RWPE1 (cell line): ENCODE measurements at regions of chr5 and their contacts with region 1.

Region 1: GRCh38 chr5:135829681-135830383 is 4.6 kb upstream of the SLC25A48 start:
- DNase-seq: peak; percentile 82
- H3K27ac ChIP-seq: no peak overlapping the region
- CTCF ChIP-seq: peak; percentile 84

Region 2: GRCh38 chr5:135560858-135561257 is 269.0 kb before region 1 on chr5:
- CTCF ChIA-PET with region 1: interaction called, 27 read pairs
- POLR2A ChIA-PET with region 1: no interaction called
- DNase-seq: peak; percentile 91
- H3K27ac ChIP-seq: no peak overlapping the region
- CTCF ChIP-seq: peak; percentile 95

Region 3: DNA sequence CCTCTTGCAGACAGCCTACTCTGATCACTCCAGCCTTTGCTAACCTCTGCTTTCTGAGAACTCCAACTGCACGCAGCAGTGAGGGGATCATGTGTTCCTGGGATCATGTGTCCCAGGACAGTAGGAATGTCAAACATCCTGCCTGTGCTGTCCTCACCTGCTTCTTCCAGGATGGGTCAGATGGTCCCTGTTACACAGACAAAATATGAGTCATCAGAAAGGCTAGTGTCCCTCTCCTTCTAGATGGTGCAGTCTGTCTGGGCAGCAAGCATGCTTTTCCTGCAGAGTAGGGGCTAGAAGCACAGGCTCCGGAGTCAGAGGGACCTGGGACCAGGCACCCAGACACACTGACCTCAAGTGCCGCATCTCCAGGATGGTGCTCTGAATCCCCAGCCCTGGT is 15.5 kb before region 1 on chr5:
- CTCF ChIA-PET with region 1: interaction called, 15 read pairs
- POLR2A ChIA-PET with region 1: no interaction called
- DNase-seq: no peak
- H3K27ac ChIP-seq: no peak overlapping the region
- CTCF ChIP-seq: no peak

Region 4: GRCh38 chr5:136202469-136203205 is 372.8 kb after region 1 on chr5:
- CTCF ChIA-PET with region 1: no interaction called
- POLR2A ChIA-PET with region 1: no interaction called
- DNase-seq: no peak
- H3K27ac ChIP-seq: no peak overlapping the region
- CTCF ChIP-seq: no peak